ENCODE measurements at regions of chr12 and their contacts with region 1.

Region 1: DNA sequence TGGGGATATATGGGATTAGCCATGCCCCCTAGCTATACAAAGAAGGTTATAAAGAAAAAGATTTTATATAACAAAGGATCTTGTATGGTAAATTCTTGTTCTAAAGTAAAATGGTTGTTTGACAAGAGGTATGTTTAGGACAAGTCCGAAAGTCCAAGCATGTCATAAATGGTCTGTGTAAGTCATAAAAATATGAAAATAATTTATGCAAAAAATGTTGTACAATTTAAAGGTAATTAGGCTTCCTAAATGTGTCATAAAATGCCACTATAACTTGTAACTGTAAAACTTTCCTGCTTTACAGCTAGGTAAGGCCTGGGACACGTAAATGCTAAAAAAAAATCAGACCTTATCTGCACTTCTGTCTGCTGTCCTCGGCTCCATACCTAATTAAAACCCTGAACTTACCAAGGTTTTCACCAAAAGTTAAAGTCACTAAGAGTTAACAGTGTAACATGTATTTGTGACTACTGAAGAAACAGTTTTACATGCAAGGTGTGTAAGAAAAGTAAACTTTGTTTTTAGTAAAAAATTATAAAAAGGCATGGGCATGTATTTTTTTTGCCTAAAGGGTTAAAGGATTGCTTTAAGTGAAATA is 110.0 kb upstream of the RESF1 start:
- DNase-seq: no peak
- ATAC-seq: no peak
- H3K4me3 ChIP-seq: no peak overlapping the region
- H3K4me3 Mint-ChIP-seq: no peak overlapping the region
- H3K27ac ChIP-seq: no peak overlapping the region
- H3K27ac Mint-ChIP-seq: no peak overlapping the region
- H3K4me1 ChIP-seq: no peaks in the 10 kb centered on the region
- H3K4me1 Mint-ChIP-seq: peaks cover 0 to 10% (median 8%) of the 10 kb centered on the region in 3 donors
- H3K27me3 ChIP-seq: no peaks in the 10 kb centered on the region
- H3K27me3 Mint-ChIP-seq: no peaks in the 10 kb centered on the region

Region 2: DNA sequence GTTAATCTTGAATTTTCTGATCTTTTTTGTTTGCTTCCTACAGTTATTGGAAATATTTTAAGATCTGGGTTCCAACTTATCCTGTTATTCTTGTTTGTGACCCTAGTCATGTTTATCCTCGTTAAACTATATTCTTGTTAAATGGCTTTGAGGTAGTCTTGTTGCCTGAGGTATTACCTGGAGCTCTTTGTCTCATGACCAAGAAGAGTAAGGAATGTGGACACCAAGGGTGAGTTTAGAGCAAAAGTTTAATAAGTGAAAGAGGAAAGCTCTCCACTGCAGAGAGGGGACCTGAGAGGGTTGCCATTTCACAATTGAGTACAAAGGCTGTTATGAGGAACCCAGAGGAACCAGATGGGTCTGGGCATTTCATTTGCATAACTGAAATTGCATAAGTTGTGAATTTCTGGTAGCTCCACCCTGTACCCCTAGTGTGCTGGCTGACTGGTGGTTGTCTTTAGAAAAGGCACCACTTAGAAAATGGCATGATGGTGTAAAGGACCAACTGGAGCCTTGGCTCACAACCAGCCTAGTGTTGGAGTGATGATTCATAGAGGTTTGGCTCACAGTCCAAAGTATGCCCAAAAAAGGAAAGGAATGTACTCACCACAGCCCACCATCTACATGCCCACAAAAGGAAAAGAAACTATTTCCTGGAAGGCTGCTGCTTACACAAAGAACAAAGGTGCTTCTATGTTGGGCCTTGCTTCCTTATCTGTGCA is 73.3 kb after region 1 on chr12:
- CTCF ChIA-PET with region 1: no interaction called
- POLR2A ChIA-PET with region 1: interaction called in 1 of 2 experiments, 14 read pairs
- DNase-seq: no peak
- ATAC-seq: no peak
- H3K4me3 ChIP-seq: no peak overlapping the region
- H3K4me3 Mint-ChIP-seq: no peak overlapping the region
- H3K27ac ChIP-seq: no peak overlapping the region
- H3K27ac Mint-ChIP-seq: no peak overlapping the region
- H3K4me1 ChIP-seq: peaks cover 0 to 4% of the 10 kb centered on the region in 2 experiments
- H3K4me1 Mint-ChIP-seq: peaks cover 1 to 8% (median 5%) of the 10 kb centered on the region in 3 donors
- H3K27me3 ChIP-seq: no peaks in the 10 kb centered on the region
- H3K27me3 Mint-ChIP-seq: no peaks in the 10 kb centered on the region